ENCODE measurements at regions of chr1 and their contacts with region 1.

Region 1: DNA sequence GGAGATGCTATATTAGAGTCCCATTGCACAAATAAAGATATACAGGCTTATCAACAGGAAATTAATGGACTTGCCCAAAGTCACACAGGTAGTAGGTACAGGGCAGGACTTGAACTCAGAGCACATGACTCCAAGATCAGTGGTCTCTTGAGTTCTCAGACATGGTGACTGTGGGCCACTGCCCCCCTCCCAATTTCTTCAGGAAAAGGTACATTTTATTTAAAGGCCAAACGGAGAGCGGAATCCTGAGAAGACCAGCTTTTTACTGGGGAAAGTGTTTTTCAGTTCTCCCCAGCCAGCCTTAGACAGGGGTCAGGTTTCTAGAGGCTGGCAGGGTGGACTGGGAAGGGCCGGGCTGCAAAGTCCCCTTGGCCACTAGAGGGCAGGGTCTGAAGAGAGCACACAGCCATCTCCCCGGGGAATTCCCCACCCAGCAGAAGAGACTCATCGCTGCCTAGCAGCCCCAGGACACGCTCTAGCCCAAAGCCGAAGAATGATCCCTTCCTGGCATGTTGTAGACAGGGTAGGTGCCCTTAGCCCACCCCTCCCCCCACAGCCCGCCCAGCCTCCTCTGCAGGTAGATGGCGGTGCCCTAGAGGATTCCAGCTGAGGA is 29.7 kb downstream of the ACP6 start:
- DNase-seq: peak; percentile 69 to 86 (median 81)
- H3K4me3 ChIP-seq: no peak overlapping the region
- H3K27ac ChIP-seq: no peak overlapping the region
- H3K4me1 ChIP-seq: no peaks in the 10 kb centered on the region
- H3K27me3 ChIP-seq: no peaks in the 10 kb centered on the region
- CTCF ChIP-seq: peak; percentile 66 to 81 (median 76)
- POLR2A ChIP-seq: no peak

Region 2: DNA sequence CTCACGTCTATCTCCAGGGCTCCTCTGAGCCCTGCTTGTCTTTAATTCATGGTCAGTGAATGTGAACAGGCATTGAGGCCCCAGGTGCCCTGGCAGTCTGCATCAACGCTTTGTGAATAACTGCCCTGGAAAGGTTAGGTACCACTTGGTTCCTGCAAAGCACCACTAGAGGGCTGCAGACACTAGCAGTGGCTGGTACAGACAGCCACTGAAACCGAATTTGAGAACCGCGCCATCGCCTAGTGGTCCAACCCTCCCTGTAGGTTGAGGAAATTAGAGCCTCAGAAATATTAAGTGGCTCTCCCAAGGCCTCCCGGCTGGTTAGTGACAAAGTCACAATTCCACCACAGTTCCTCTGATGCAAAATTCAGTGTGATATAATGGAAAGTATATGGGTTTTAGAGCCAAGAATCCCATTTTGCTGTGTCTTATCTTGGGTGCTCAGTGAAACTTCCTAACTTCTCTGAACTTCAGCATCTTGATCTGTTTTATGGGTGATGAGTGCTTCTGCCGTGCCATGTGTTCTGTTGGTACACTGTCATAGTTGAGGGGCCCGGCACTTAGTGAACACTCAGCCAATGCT is 145.6 kb before region 1 on chr1:
- intact Hi-C with region 1: loop called (anchors 5 kb)
- DNase-seq: peak; percentile 76 to 91 (median 85)
- H3K4me3 ChIP-seq: no peak overlapping the region
- H3K27ac ChIP-seq: no peak overlapping the region
- H3K4me1 ChIP-seq: peaks cover 3 to 6% of the 10 kb centered on the region in 2 donors
- H3K27me3 ChIP-seq: no peaks in the 10 kb centered on the region
- CTCF ChIP-seq: peak; percentile 89 to 96 (median 96)
- POLR2A ChIP-seq: no peak

Region 3: GRCh38 chr1:147591261-147591891 is 49.3 kb before region 1 on chr1:
- intact Hi-C with region 1: loop called in 1 of 2 experiments (anchors 5 kb)
- DNase-seq: no peak
- H3K4me3 ChIP-seq: no peak overlapping the region
- H3K27ac ChIP-seq: peak overlapping the region in 3 of 5 donors; percentile 31 to 54 (median 44)
- H3K4me1 ChIP-seq: peaks cover 14 to 16% of the 10 kb centered on the region in 2 donors
- H3K27me3 ChIP-seq: no peaks in the 10 kb centered on the region
- CTCF ChIP-seq: no peak
- POLR2A ChIP-seq: no peak

Region 4: GRCh38 chr1:147699686-147700041 is 59.0 kb after region 1 on chr1:
- intact Hi-C with region 1: loop called in 1 of 2 experiments (anchors 10 kb)
- DNase-seq: no peak
- H3K4me3 ChIP-seq: no peak overlapping the region
- H3K27ac ChIP-seq: no peak overlapping the region
- H3K4me1 ChIP-seq: no peaks in the 10 kb centered on the region
- H3K27me3 ChIP-seq: peaks cover 3% of the 10 kb centered on the region
- CTCF ChIP-seq: no peak
- POLR2A ChIP-seq: no peak

Region 5: GRCh38 chr1:147890177-147890790 is 249.6 kb after region 1 on chr1:
- intact Hi-C with region 1: loop called (anchors 5 kb)
- DNase-seq: peak; percentile 45 to 81 (median 77)
- H3K4me3 ChIP-seq: no peak overlapping the region
- H3K27ac ChIP-seq: no peak overlapping the region
- H3K4me1 ChIP-seq: no peaks in the 10 kb centered on the region
- H3K27me3 ChIP-seq: no peaks in the 10 kb centered on the region
- CTCF ChIP-seq: peak; percentile 32 to 67 (median 51)
- POLR2A ChIP-seq: no peak

Measured in adrenal gland (tissue), 19 donors.